ENCODE measurements at regions of chr7 and their contacts with region 1.

Region 1: DNA sequence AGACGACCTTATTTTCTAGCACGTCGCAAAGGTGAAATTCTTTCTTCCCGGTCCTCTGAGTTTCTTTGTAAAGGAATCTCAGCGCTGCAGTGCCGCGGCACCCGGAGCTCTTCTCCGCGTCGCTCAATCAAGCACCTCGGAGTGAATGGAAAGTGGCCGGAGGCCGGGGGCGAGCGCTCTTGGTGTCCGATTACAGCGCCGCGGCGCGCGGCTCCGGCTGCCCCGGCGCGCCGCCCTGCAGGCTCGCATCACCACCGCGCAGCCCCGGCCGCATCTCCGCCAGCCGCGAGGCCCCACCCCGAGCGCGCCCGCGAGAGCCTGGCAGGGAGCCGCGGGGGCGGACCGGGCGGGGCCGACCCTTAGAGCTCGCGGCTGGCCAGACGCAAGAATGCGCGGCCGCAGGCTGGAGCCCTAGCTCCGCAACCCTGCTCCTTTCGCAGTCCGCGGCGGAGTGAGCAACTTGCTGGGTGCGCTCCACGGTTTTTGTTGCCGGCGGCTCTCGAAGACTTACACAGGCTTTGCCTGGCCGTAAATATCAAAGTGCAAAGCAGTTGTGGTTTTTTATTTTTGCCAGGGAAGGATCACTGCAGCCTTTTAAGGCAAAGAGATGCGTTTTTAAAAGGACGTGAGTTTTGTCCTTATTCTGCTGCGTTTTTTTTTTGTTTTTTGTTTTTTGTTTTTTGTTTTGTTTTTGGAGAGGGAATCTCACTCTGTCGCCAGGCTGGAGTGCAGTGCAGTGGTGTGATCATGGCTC is at the start of gene SEMA3C:
- DNase-seq: peak; percentile 91
- H3K4me3 ChIP-seq: peak within 1 kb of the TSS; percentile 90
- CTCF ChIP-seq: no peak

Region 2: DNA sequence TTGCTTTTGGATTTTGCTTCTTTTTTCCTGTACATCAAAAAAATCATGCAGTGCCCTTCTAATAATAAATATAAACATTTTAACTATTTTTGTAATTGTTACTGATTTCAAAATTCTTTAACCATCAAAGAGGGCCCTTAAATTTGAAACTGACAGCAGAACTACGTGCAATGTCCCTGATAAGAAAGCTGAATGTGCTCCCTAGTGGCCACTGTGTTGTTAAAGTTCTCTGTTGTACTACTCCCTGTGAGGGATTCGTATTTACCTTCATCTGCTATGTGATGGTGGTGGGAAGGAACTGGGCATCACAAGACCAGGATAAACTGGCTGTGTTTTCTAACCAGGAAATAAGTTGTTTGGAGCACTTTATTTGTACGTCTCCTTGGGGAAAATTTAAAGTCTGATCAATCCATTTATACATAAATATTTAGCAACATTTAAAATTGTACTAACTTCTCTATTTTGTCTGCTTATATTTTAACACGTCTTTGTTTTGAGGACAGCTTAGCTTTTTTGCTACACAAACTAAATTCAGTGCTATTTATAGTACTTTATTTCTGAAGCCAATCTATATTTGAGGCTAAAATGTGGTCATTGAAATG is 528.4 kb after region 1 on chr7:
- in situ Hi-C with region 1: loop called (anchors 25 kb)
- DNase-seq: peak; percentile 60
- H3K4me3 ChIP-seq: no peak overlapping the region
- CTCF ChIP-seq: peak; percentile 64

Measured in astrocyte of the cerebellum (primary cell).